Endothelial cell of umbilical vein (primary cell): ENCODE measurements at regions of chr11 and their contacts with region 1.

Region 1: DNA sequence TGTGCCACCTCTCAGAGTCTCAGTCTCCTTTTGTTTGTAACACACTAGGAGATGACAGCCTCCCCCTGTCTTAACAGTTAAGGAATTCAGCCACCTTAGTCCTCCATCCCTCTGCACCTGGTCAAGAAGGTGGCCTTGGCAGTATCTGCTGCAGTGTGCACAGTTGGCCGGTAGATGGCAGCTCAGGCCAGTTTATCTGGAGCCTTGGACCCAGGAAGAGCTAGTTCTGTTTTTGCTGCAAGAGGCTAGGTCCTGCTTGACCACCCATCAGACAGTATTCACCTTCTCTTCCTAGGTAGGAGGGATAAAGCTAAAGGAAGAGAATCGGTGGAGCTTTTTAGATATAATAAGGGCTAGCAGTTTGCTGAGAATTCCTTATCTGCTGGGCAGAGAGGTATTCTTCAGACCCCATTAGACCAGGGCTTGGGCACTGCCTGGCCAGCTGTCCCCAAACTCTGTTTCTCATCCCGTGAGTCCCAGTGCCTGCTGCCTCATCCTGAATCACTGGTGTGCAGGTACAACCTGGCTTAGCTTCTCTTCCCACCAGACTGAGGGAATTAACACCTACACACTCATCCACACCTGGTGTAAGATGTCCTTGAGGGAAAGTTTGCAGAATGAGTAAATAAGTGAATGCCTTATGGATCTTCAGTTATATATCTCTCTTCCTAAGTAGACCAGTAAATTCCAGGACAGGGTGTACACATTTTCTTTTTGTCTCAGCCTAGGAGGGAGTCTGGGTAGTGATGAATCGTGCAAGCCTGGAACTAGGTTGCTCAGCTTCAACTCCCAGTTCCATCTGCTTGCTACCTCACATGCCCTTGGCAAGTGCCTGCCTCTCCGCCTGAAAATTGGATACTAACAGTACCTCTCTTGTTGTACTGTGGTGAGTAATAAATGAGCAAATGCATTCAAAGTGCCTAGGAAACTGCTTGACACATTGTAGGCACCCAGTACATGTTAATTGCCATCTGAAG is 70.8 kb upstream of the NARS2 start:
- DNase-seq: peak; percentile 60
- H3K4me3 ChIP-seq: no peak overlapping the region
- H3K27ac ChIP-seq: no peak overlapping the region
- H3K4me1 ChIP-seq: no peaks in the 10 kb centered on the region
- H3K27me3 ChIP-seq: peaks cover 0 to 2% of the 10 kb centered on the region in 2 experiments
- CTCF ChIP-seq: peak; percentile 87 to 93
- POLR2A ChIP-seq: no peak

Region 2: DNA sequence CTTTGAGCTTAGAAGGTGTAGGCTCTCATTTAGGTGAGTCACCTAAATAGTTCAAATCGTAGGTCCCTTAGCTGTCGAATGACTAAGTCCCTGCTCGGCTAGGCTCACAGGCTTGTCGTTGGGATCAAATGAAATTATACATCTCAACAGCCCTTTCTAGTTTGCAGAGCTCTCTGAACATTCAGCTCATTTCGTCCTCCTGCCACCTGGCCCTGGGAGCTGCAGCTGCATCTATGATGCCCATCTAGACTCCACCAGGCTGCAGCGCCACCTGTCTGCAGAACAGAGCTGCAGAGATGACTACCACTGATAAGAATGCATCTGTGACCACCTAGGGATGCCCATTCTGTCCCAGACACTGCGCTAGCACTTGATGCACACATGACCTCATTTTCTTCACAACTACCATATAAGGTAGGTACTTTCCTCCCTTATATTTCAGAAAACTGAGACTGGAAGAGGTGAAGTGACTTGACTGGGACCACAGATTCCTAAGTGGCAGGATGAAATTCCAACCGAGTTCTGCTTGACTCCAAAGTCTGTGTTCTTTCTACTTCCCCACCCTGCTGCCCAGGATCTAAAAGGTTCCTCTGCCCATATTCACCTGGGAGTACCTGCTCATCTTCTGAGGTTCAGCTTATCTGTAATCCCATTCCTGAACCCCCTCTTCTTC is 70.3 kb after region 1 on chr11:
- CTCF ChIA-PET with region 1: interaction called, 57 read pairs
- POLR2A ChIA-PET with region 1: no interaction called
- dilution Hi-C with region 1: no loop called
- intact Hi-C with region 1: loop called (anchors 1 kb)
- DNase-seq: peak; percentile 36
- H3K4me3 ChIP-seq: no peak overlapping the region
- H3K27ac ChIP-seq: no peak overlapping the region
- H3K4me1 ChIP-seq: no peaks in the 10 kb centered on the region
- H3K27me3 ChIP-seq: no peaks in the 10 kb centered on the region
- CTCF ChIP-seq: peak; percentile 55 to 66
- POLR2A ChIP-seq: no peak

Region 3: GRCh38 chr11:78845496-78845895 is 200.0 kb after region 1 on chr11:
- CTCF ChIA-PET with region 1: no interaction called
- POLR2A ChIA-PET with region 1: no interaction called
- dilution Hi-C with region 1: no loop called
- intact Hi-C with region 1: no loop called
- DNase-seq: no peak
- H3K4me3 ChIP-seq: no peak overlapping the region
- H3K27ac ChIP-seq: no peak overlapping the region
- H3K4me1 ChIP-seq: no peaks in the 10 kb centered on the region
- H3K27me3 ChIP-seq: peaks cover 0 to 2% of the 10 kb centered on the region in 2 experiments
- CTCF ChIP-seq: no peak
- POLR2A ChIP-seq: no peak

Region 4: GRCh38 chr11:78961247-78961646 is 315.7 kb after region 1 on chr11:
- CTCF ChIA-PET with region 1: interaction called, 45 read pairs
- POLR2A ChIA-PET with region 1: no interaction called
- dilution Hi-C with region 1: no loop called
- intact Hi-C with region 1: no loop called
- DNase-seq: peak; percentile 29
- H3K4me3 ChIP-seq: no peak overlapping the region
- H3K27ac ChIP-seq: no peak overlapping the region
- H3K4me1 ChIP-seq: peaks cover 7% of the 10 kb centered on the region
- H3K27me3 ChIP-seq: peaks cover 1 to 4% of the 10 kb centered on the region in 2 experiments
- CTCF ChIP-seq: peak; percentile 15 to 32
- POLR2A ChIP-seq: no peak

Region 5: DNA sequence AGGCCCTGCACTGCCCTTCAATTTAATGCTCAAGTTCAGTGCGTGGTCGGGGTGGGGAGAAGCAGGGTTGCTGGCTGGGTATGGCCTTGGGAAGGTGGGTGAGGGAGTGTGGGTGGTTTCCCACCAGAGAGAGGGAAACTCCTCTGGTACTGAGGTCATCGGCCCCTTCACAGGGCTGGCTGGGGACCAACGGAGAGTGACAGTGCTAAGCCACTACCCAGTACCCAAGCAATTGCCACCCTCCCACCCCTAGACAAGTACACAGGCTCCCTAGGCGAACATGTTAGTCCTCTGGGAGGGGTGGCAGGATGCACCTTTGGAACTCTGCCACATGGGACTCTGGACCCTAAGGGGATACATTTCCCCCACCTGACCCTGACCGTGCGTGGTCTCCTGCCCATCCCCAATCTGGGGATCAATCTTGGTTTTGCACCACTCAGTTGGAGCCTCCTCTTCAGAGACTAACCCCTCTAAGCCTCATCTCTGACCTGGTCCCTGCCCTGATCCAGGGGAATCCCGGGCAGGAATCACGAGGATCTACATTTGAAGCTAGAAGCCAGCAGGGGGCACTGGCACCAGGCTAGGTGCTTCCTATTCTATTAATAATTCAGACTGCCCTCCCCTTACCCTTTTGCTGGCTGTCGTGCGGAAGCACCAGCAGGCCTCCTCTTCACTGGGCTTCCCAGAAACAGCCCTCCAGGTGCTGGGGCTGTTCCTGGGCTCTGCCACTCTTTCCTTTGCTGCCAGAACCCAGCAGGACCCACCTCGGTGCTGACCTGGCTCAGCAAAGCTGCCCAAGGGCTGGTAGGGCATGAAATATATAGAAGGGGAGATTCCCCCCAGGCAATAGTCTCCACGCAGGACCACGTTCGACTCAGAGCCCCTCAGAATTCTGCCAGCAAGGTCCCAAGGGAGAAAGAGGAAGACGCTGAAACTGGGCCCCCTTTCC is 417.6 kb after region 1 on chr11:
- CTCF ChIA-PET with region 1: interaction called, 14 read pairs
- POLR2A ChIA-PET with region 1: no interaction called
- dilution Hi-C with region 1: no loop called
- intact Hi-C with region 1: no loop called
- DNase-seq: peak; percentile 46
- H3K4me3 ChIP-seq: no peak overlapping the region
- H3K27ac ChIP-seq: no peak overlapping the region
- H3K4me1 ChIP-seq: no peaks in the 10 kb centered on the region
- H3K27me3 ChIP-seq: peaks cover 0 to 6% of the 10 kb centered on the region in 2 experiments
- CTCF ChIP-seq: peak; percentile 53 to 63
- POLR2A ChIP-seq: no peak

Region 6: DNA sequence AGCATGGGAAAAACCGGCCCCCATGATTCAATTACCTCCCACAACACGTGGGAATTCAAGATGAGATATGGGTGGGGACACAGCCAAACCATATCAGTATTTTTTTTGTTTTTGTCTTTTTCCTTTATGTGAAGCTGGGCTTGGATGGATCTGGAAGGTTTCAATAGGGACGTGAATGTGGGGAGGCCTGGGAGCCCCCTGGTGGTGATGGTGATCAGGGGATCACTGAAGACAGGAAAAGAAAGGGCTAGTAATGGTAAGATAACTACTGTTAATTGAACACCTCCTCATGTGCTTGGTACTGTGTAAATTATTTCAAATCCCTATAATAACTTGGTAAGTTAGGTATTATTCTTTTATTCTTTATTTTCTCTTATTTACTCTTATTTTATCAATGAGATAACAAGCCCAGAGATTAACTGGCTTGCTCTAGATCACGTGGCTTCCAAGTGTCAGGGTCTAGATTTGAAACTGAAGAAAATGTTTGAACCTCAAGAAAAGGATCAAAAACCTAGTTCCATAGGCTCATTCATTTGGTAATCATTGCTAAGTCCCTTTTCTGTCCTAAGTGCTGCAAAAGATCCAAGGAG is 431.1 kb after region 1 on chr11:
- CTCF ChIA-PET with region 1: interaction called, 68 read pairs
- POLR2A ChIA-PET with region 1: no interaction called
- dilution Hi-C with region 1: no loop called
- intact Hi-C with region 1: loop called (anchors 1 kb)
- DNase-seq: peak; percentile 50
- H3K4me3 ChIP-seq: no peak overlapping the region
- H3K27ac ChIP-seq: no peak overlapping the region
- H3K4me1 ChIP-seq: no peaks in the 10 kb centered on the region
- H3K27me3 ChIP-seq: no peaks in the 10 kb centered on the region
- CTCF ChIP-seq: peak; percentile 63 to 69
- POLR2A ChIP-seq: no peak

Region 7: GRCh38 chr11:80155412-80156017 is 1510.0 kb after region 1 on chr11:
- CTCF ChIA-PET with region 1: interaction called, 12 read pairs
- POLR2A ChIA-PET with region 1: no interaction called
- dilution Hi-C with region 1: no loop called
- intact Hi-C with region 1: no loop called
- DNase-seq: peak; percentile 9
- H3K4me3 ChIP-seq: no peak overlapping the region
- H3K27ac ChIP-seq: no peak overlapping the region
- H3K4me1 ChIP-seq: no peaks in the 10 kb centered on the region
- H3K27me3 ChIP-seq: no peaks in the 10 kb centered on the region
- CTCF ChIP-seq: peak; percentile 15 to 28
- POLR2A ChIP-seq: no peak